ENCODE measurements at regions of chr2 and their contacts with region 1.

Region 1: DNA sequence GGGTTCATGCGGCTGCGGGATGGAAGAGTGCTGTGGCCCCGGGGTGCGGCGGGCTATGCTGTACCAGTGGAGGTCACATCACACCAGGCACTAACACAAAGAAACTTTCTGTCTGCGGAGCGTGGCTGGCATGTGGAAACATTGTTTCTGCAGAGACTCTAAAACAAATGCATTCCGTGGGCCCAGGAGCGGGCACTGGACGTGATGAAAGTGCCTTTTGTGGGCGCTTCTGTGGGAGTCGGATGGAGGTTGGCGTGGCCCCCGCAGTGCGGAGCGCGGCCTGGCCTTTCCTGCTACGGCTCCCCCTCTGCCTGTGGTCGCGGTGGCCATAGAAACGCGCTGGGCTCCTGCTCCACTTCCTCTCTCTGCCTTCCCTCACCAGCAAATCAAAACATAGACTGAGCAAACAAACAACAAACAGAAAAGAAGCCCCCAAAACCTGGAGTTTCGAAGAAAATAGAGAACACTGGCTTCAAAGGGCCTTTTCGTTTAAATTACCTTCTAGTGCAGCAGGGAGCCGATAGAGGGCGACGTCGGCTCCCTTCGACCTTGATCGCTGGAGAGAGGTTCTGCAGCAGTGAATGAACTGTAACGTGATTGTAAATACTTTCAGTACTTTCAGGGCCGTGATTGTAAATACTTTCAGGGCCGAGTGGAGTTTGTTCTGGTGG is 51.4 kb downstream of the KIF5C start:
- DNase-seq: peak; percentile 21 to 60 (median 48)
- ATAC-seq: peak; percentile 89
- H3K4me3 ChIP-seq: peak overlapping the region; percentile 43
- H3K4me3 Mint-ChIP-seq: peak overlapping the region; percentile 77 to 88 (median 84)
- H3K27ac ChIP-seq: no peak overlapping the region
- H3K27ac Mint-ChIP-seq: peak overlapping the region; percentile 29 to 94 (median 83)
- H3K4me1 ChIP-seq: peaks cover 0 to 7% of the 10 kb centered on the region in 2 donors
- H3K4me1 Mint-ChIP-seq: peaks cover 9 to 29% (median 22%) of the 10 kb centered on the region in 7 donors
- H3K27me3 ChIP-seq: no peaks in the 10 kb centered on the region
- H3K27me3 Mint-ChIP-seq: no peaks in the 10 kb centered on the region

Region 2: DNA sequence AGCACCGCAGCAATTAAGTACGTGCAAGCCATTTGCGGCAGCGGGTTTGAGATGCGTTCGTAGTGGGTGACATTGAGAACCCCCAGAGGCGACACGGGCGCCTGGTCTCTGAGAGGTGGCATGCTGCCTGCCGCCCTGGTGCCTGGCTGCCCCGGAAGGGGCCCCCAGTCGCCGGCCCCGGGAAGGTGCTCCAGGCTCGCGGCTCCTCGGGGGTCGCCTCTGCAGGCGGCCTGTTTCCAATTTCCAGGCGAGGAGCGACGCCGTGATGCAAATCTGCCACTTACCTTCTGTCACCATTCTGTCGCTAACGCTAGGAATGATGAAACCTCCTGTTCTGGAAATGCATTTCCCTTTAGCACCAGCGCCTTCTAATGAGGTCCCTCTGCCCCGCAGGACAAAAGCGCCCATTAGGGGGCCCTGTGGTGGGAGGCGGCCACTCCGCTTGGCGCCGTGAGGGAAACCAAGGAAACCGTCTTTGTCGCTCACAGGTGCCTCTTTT is 38.4 kb before region 1 on chr2:
- CTCF ChIA-PET with region 1: no interaction called
- POLR2A ChIA-PET with region 1: no interaction called
- intact Hi-C with region 1: loop called in 1 of 2 experiments (anchors 2 kb)
- DNase-seq: peak in 2 of 9 donors; percentile 3 to 16
- ATAC-seq: peak; percentile 47
- H3K4me3 ChIP-seq: peak overlapping the region; percentile 28
- H3K4me3 Mint-ChIP-seq: peak overlapping the region; percentile 68 to 88 (median 75)
- H3K27ac ChIP-seq: no peak overlapping the region
- H3K27ac Mint-ChIP-seq: no peak overlapping the region
- H3K4me1 ChIP-seq: peaks cover 0 to 4% of the 10 kb centered on the region in 2 donors
- H3K4me1 Mint-ChIP-seq: peaks cover 0 to 18% (median 15%) of the 10 kb centered on the region in 7 donors
- H3K27me3 ChIP-seq: peaks cover 0 to 15% of the 10 kb centered on the region in 2 donors
- H3K27me3 Mint-ChIP-seq: peaks cover 13 to 70% (median 37%) of the 10 kb centered on the region in 5 donors